ENCODE measurements at regions of chr19 and their contacts with region 1.

Region 1: GRCh38 chr19:10315335-10316214 is at the start of gene FDX2:
- DNase-seq: peak; percentile 89 to 91 (median 90)
- ATAC-seq: peak; percentile 90
- H3K4me3 ChIP-seq: peak within 1 kb of the TSS; percentile 82
- H3K27ac ChIP-seq: peak within 1 kb of the TSS; percentile 73
- H3K4me1 ChIP-seq: peaks cover 20 to 48% of the 10 kb centered on the region in 2 experiments
- H3K27me3 ChIP-seq: no peaks in the 10 kb centered on the region
- CTCF ChIP-seq: no peak
- EP300 ChIP-seq: no peak
- POLR2A ChIP-seq: peak; percentile 87
- RAD21 ChIP-seq: no peak
- polyA plus RNA-seq, gene FDX2: 2.5 to 5.8 TPM

Region 2: GRCh38 chr19:10299545-10300458 is 15.8 kb before region 1 on chr19:
- CTCF ChIA-PET with region 1: no interaction called
- POLR2A ChIA-PET with region 1: interaction called, 19 read pairs
- in situ Hi-C with region 1: no loop called
- intact Hi-C with region 1: no loop called
- DNase-seq: peak; percentile 83 to 96 (median 88)
- ATAC-seq: peak; percentile 89
- H3K4me3 ChIP-seq: peak overlapping the region; percentile 23; the same call in 1 of the 2 replicates
- H3K27ac ChIP-seq: peak overlapping the region; percentile 95
- H3K4me1 ChIP-seq: peaks cover 38 to 67% of the 10 kb centered on the region in 2 experiments; a peak in 4 of 5 replicates
- H3K27me3 ChIP-seq: no peaks in the 10 kb centered on the region
- CTCF ChIP-seq: no peak
- EP300 ChIP-seq: peak; percentile 89
- POLR2A ChIP-seq: peak; percentile 70
- RAD21 ChIP-seq: no peak; a peak in 1 of 4 replicates

Region 3: DNA sequence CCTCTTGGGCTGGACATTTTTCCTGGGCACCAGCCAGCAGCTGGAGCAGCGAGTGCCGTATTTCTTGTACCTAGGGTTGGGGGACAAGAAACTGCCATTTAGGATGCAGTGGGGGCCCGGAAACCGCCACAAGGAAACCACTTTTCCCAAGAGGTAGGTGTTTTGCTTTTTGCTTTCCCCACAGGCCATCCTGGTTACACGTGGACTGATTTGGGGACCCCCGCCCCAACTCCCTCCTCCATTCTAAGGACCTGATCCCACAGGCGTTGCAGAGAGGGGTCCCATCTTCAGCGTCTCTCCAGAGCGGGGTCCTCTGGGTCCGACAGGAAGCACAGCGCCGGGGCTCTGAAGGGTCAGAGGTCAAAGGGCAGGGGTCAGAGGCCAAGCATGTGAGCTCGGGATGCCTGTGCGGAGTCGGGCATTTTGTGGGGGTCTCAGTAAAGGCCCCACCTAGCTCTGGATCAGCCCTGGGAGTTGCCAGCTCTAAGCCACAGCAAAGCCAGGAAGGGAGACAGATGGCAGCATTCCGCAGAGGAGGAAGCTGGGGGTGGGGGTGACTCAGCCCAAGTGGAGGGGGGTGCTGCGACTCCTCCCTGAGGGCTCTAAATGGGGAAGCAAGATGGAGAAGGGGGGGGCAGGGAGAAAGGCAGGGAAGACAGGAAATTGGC is 10.3 kb before region 1 on chr19:
- CTCF ChIA-PET with region 1: no interaction called
- POLR2A ChIA-PET with region 1: interaction called, 19 read pairs
- in situ Hi-C with region 1: no loop called
- intact Hi-C with region 1: no loop called
- DNase-seq: peak in 2 of 4 experiments; percentile 51 to 53
- ATAC-seq: no peak
- H3K4me3 ChIP-seq: no peak overlapping the region
- H3K27ac ChIP-seq: peak overlapping the region; percentile 50; the same call in 2 of the 3 replicates
- H3K4me1 ChIP-seq: peaks cover 38 to 72% of the 10 kb centered on the region in 2 experiments; a peak in 4 of 5 replicates
- H3K27me3 ChIP-seq: no peaks in the 10 kb centered on the region
- CTCF ChIP-seq: no peak
- EP300 ChIP-seq: no peak
- POLR2A ChIP-seq: no peak
- RAD21 ChIP-seq: no peak

Region 4: GRCh38 chr19:10325732-10326131 is 10.2 kb after region 1 on chr19:
- CTCF ChIA-PET with region 1: no interaction called
- POLR2A ChIA-PET with region 1: interaction called, 11 read pairs
- in situ Hi-C with region 1: no loop called
- intact Hi-C with region 1: no loop called
- DNase-seq: no peak
- ATAC-seq: no peak
- H3K4me3 ChIP-seq: no peak overlapping the region
- H3K27ac ChIP-seq: no peak overlapping the region
- H3K4me1 ChIP-seq: peaks cover 0 to 45% of the 10 kb centered on the region in 2 experiments; a peak in 2 of 5 replicates
- H3K27me3 ChIP-seq: no peaks in the 10 kb centered on the region
- CTCF ChIP-seq: no peak
- EP300 ChIP-seq: no peak
- POLR2A ChIP-seq: no peak
- RAD21 ChIP-seq: no peak